CD4-positive, alpha-beta memory T cell (primary cell): ENCODE measurements at regions of chr2 and their contacts with region 1.

Region 1: DNA sequence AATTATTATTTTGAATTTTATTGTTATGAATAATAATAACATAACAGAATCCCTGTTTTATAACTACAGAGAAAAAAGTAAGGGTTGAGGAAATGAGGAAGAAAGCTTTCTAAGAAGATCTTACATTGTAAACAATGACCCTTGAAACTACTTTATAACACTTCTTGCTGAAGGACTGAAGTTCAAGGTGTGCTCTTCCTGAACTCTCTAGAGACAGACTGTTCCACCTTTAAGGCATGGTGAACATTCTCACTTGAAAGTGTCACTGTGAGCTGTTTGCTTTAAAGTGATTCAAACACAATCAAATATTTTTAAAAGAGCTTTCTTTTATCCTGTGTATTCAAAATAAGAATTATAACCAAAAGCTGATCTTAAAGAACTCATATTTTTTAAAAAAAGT is 131.5 kb downstream of the DNAH7 start:
- DNase-seq: no peak
- H3K4me3 ChIP-seq: no peak overlapping the region
- H3K4me3 Mint-ChIP-seq: no peak overlapping the region
- H3K27ac ChIP-seq: no peak overlapping the region
- H3K27ac Mint-ChIP-seq: no peak overlapping the region
- H3K4me1 ChIP-seq: no peaks in the 10 kb centered on the region
- H3K4me1 Mint-ChIP-seq: no peaks in the 10 kb centered on the region
- H3K27me3 ChIP-seq: no peaks in the 10 kb centered on the region
- H3K27me3 Mint-ChIP-seq: peaks cover 0 to 6% of the 10 kb centered on the region in 2 donors

Region 2: GRCh38 chr2:194166818-194167217 is 1770.4 kb before region 1 on chr2:
- CTCF ChIA-PET with region 1: no interaction called
- POLR2A ChIA-PET with region 1: no interaction called
- intact Hi-C with region 1: loop called (anchors 5 kb)
- DNase-seq: peak in 2 of 5 donors; percentile 10 to 12
- H3K4me3 ChIP-seq: no peak overlapping the region
- H3K4me3 Mint-ChIP-seq: no peak overlapping the region
- H3K27ac ChIP-seq: no peak overlapping the region
- H3K27ac Mint-ChIP-seq: no peak overlapping the region
- H3K4me1 ChIP-seq: no peaks in the 10 kb centered on the region
- H3K4me1 Mint-ChIP-seq: no peaks in the 10 kb centered on the region
- H3K27me3 ChIP-seq: no peaks in the 10 kb centered on the region
- H3K27me3 Mint-ChIP-seq: peaks cover 0 to 2% of the 10 kb centered on the region in 2 donors